Natural killer cell (primary cell): ENCODE measurements at regions of chr14 and their contacts with region 1.

Region 1: DNA sequence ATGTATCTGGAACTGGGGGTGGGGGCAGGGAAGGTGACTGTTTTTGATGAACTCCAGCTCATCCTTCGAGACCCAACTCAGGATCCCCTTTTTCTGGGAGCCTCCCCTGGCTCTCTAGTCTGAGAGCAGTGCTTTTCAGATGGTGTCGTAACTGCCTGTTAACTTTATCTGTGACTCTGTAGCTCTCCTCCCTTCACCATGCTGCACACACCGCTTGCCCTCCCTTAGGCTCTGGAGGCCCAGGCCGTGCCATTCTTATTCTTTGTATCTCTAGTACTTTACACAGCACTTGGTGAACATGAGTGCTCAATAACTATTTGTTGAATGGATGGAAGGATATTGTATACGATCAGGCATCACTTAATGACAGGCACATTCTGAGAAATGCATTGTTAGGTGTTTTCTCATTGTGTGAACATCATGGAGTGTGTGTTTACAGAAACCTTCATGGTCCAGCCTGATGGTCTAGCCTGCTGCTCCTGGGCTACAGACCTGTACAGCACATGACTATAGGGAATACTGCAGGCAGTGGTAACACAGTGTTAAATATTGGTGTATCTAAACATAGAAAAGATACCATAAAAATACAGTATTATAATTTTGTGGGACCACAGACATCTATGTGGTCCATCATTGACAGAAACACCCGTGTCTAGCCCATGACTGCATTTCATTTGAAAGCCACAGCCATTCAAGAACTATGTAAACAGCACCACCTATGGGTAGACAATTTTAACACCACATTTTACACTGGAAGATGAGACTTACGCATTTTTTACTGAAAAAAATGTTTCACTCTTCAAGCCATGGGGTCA is 91.8 kb downstream of the EML1 start:
- DNase-seq: peak in 1 of 2 donors; percentile 78
- ATAC-seq: peak; percentile 72 to 88 (median 78)
- H3K4me3 ChIP-seq: no peak overlapping the region
- H3K4me3 Mint-ChIP-seq: no peak overlapping the region
- H3K27ac ChIP-seq: no peak overlapping the region
- H3K27ac Mint-ChIP-seq: no peak overlapping the region
- H3K4me1 ChIP-seq: no peaks in the 10 kb centered on the region
- H3K4me1 Mint-ChIP-seq: no peaks in the 10 kb centered on the region
- H3K27me3 ChIP-seq: peaks cover 6% of the 10 kb centered on the region
- H3K27me3 Mint-ChIP-seq: peaks cover 5 to 32% of the 10 kb centered on the region in 2 donors
- CTCF ChIP-seq: peak; percentile 87

Region 2: DNA sequence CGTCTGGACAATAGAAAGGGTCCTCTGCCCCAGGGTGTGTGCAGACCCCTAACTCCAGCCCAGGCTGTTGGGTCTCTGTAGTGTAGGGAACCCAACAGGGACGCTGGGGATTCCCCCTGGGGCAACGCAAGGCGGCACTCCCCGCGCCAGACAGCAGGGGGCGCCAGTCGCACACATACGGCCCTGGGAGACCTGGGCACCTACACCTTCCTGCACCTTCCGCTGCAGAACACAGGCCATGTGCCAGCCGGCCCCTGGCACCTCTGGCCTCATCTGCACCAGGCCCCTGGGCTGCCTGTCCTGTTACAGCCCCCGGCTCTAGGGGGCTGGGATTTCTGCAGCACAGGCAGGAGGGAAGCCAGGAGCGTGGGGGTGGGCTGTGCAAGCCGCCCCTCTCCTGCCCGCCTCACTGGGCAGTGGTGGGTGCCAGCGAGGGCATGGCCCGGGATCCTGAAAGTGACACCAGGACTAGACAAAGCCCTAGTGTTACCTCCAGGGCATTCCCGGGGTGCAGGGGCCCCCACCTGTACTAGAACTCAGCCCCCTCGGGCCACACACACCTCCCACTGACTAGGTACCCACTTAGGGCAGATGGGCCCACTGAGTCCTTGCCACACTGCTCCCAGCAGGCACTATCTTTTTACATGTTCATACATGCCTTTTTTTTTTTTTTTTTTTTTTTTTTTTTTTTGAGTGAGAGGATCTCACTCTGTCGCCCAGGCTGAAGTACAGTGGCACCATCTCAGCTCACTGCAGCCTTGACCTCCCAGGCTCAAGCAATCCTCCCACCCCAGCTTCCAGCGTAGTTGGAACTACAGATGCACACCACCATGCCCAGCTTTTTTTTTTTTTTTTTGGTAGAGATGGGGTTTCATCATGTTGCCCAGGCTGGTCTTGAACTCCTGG is 366.3 kb before region 1 on chr14:
- intact Hi-C with region 1: loop called (anchors 1 kb)
- DNase-seq: peak; percentile 80 to 89
- ATAC-seq: peak; percentile 82 to 97 (median 85)
- H3K4me3 ChIP-seq: no peak overlapping the region
- H3K4me3 Mint-ChIP-seq: no peak overlapping the region
- H3K27ac ChIP-seq: no peak overlapping the region
- H3K27ac Mint-ChIP-seq: no peak overlapping the region
- H3K4me1 ChIP-seq: peaks cover 5% of the 10 kb centered on the region
- H3K4me1 Mint-ChIP-seq: no peaks in the 10 kb centered on the region
- H3K27me3 ChIP-seq: no peaks in the 10 kb centered on the region
- H3K27me3 Mint-ChIP-seq: no peaks in the 10 kb centered on the region
- CTCF ChIP-seq: peak; percentile 97

Region 3: GRCh38 chr14:99683619-99684355 is 201.3 kb before region 1 on chr14 and contains the start of gene CYP46A1:
- intact Hi-C with region 1: loop called (anchors 1 kb)
- DNase-seq: peak; percentile 99 to 100
- ATAC-seq: peak; percentile 93 to 99 (median 93)
- H3K4me3 ChIP-seq: peak within 1 kb of the TSS; percentile 91
- H3K4me3 Mint-ChIP-seq: peak within 1 kb of the TSS; percentile 93
- H3K27ac ChIP-seq: peak within 1 kb of the TSS; percentile 85
- H3K27ac Mint-ChIP-seq: peak within 1 kb of the TSS; percentile 82 to 91
- H3K4me1 ChIP-seq: peaks cover 16% of the 10 kb centered on the region
- H3K4me1 Mint-ChIP-seq: peaks cover 7 to 27% of the 10 kb centered on the region in 2 donors
- H3K27me3 ChIP-seq: peaks cover 7% of the 10 kb centered on the region
- H3K27me3 Mint-ChIP-seq: peaks cover 29 to 32% of the 10 kb centered on the region in 2 donors
- CTCF ChIP-seq: no peak
- total RNA-seq, gene CYP46A1: 0.09 to 0.45 (median 0.09) TPM

Region 4: GRCh38 chr14:99729991-99730868 is 154.8 kb before region 1 on chr14:
- intact Hi-C with region 1: loop called (anchors 1 kb)
- DNase-seq: peak; percentile 64 to 74
- ATAC-seq: peak; percentile 69 to 92 (median 90)
- H3K4me3 ChIP-seq: no peak overlapping the region
- H3K4me3 Mint-ChIP-seq: peak overlapping the region; percentile 59
- H3K27ac ChIP-seq: no peak overlapping the region
- H3K27ac Mint-ChIP-seq: no peak overlapping the region
- H3K4me1 ChIP-seq: no peaks in the 10 kb centered on the region
- H3K4me1 Mint-ChIP-seq: no peaks in the 10 kb centered on the region
- H3K27me3 ChIP-seq: peaks cover 10% of the 10 kb centered on the region
- H3K27me3 Mint-ChIP-seq: peaks cover 17 to 23% of the 10 kb centered on the region in 2 donors
- CTCF ChIP-seq: peak; percentile 74

Region 5: GRCh38 chr14:99862136-99862535 is 22.9 kb before region 1 on chr14:
- intact Hi-C with region 1: no loop called
- DNase-seq: no peak
- ATAC-seq: no peak
- H3K4me3 ChIP-seq: no peak overlapping the region
- H3K4me3 Mint-ChIP-seq: no peak overlapping the region
- H3K27ac ChIP-seq: no peak overlapping the region
- H3K27ac Mint-ChIP-seq: no peak overlapping the region
- H3K4me1 ChIP-seq: no peaks in the 10 kb centered on the region
- H3K4me1 Mint-ChIP-seq: no peaks in the 10 kb centered on the region
- H3K27me3 ChIP-seq: no peaks in the 10 kb centered on the region
- H3K27me3 Mint-ChIP-seq: peaks cover 10 to 31% of the 10 kb centered on the region in 2 donors
- CTCF ChIP-seq: no peak